T-cell (primary cell): ENCODE measurements at regions of chr10 and their contacts with region 1.

Region 1: GRCh38 chr10:128704716-128705115 is 578.5 kb upstream of the MKI67 start:
- DNase-seq: no peak
- ATAC-seq: no peak
- H3K4me3 ChIP-seq: no peak overlapping the region
- H3K4me3 Mint-ChIP-seq: no peak overlapping the region
- H3K27ac ChIP-seq: no peak overlapping the region
- H3K27ac Mint-ChIP-seq: no peak overlapping the region
- H3K4me1 ChIP-seq: no peaks in the 10 kb centered on the region
- H3K4me1 Mint-ChIP-seq: no peaks in the 10 kb centered on the region
- H3K27me3 ChIP-seq: peaks cover 3 to 6% of the 10 kb centered on the region in 2 experiments
- H3K27me3 Mint-ChIP-seq: peaks cover 8 to 9% of the 10 kb centered on the region in 2 donors

Region 2: DNA sequence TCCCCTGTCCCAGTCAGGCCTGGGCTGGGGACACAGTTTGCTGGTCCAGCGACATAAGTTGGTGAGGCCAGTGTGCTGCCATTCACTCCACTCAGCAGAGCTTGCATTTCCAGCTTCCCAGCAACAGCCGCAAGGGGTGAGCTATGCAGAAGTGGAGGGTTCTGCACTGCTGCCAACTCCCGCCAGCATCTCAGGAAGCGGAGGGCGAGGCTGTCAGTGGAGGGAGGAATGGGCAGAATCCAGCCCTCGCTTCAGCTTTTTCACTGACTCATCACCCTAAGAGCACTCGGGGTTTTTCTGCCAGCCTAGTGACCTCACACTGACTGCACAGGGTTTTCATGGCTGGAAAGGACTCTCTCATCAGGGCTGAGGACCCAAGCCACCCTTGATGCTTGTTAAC is 46.6 kb after region 1 on chr10:
- CTCF ChIA-PET with region 1: no interaction called
- POLR2A ChIA-PET with region 1: interaction called in 1 of 2 experiments, 11 read pairs
- DNase-seq: no peak
- ATAC-seq: no peak
- H3K4me3 ChIP-seq: no peak overlapping the region
- H3K4me3 Mint-ChIP-seq: no peak overlapping the region
- H3K27ac ChIP-seq: no peak overlapping the region
- H3K27ac Mint-ChIP-seq: no peak overlapping the region
- H3K4me1 ChIP-seq: no peaks in the 10 kb centered on the region
- H3K4me1 Mint-ChIP-seq: no peaks in the 10 kb centered on the region
- H3K27me3 ChIP-seq: peaks cover 0 to 2% of the 10 kb centered on the region in 2 experiments
- H3K27me3 Mint-ChIP-seq: peaks cover 0 to 2% of the 10 kb centered on the region in 2 donors

Region 3: DNA sequence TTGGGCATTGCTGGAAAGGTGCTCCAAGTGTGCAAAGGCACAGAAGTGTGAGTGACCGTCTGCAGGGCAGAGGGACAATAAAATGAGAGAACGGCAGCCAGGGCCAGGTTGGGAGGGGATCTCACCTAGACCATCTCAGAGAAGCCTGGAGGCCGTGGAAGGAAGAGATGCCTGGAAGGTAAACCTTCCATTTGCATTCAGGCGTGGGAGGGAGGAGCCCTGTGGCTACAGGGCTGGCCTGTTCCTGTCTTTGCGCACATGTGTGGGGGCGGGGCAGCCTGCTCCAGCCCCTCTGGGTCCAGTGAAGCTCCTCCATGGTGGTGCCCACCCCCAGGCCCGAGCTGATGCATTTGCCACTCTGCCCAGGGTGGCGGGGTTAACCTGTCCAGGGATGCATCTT is 288.7 kb after region 1 on chr10:
- CTCF ChIA-PET with region 1: no interaction called
- POLR2A ChIA-PET with region 1: no interaction called
- DNase-seq: no peak
- ATAC-seq: no peak
- H3K4me3 ChIP-seq: no peak overlapping the region
- H3K4me3 Mint-ChIP-seq: no peak overlapping the region
- H3K27ac ChIP-seq: no peak overlapping the region
- H3K27ac Mint-ChIP-seq: no peak overlapping the region
- H3K4me1 ChIP-seq: no peaks in the 10 kb centered on the region
- H3K4me1 Mint-ChIP-seq: no peaks in the 10 kb centered on the region
- H3K27me3 ChIP-seq: peaks cover 0 to 5% of the 10 kb centered on the region in 2 experiments
- H3K27me3 Mint-ChIP-seq: peaks cover 0 to 2% of the 10 kb centered on the region in 2 donors

Region 4: GRCh38 chr10:129446183-129446581 is 741.5 kb after region 1 on chr10:
- CTCF ChIA-PET with region 1: no interaction called
- POLR2A ChIA-PET with region 1: no interaction called
- DNase-seq: no peak
- ATAC-seq: no peak
- H3K4me3 ChIP-seq: no peak overlapping the region
- H3K4me3 Mint-ChIP-seq: no peak overlapping the region
- H3K27ac ChIP-seq: no peak overlapping the region
- H3K27ac Mint-ChIP-seq: no peak overlapping the region
- H3K4me1 ChIP-seq: no peaks in the 10 kb centered on the region
- H3K4me1 Mint-ChIP-seq: no peaks in the 10 kb centered on the region
- H3K27me3 ChIP-seq: peaks cover 0 to 18% of the 10 kb centered on the region in 2 experiments
- H3K27me3 Mint-ChIP-seq: peaks cover 8 to 15% of the 10 kb centered on the region in 2 donors